Activated naive CD4-positive, alpha-beta T cell treated with anti-CD3 and anti-CD28 coated beads for 36 hours (primary cell): ENCODE measurements at regions of chr17 and their contacts with region 1.

Region 1: GRCh38 chr17:38674749-38675615 is at the start of gene EPOP:
- DNase-seq: peak; percentile 91
- H3K4me3 Mint-ChIP-seq: peak within 1 kb of the TSS; percentile 63
- H3K27ac Mint-ChIP-seq: peak within 1 kb of the TSS; percentile 84
- H3K4me1 Mint-ChIP-seq: peaks cover 52% of the 10 kb centered on the region
- H3K27me3 Mint-ChIP-seq: peaks cover 13% of the 10 kb centered on the region
- total RNA-seq, gene EPOP: 17.6 to 19.2 TPM

Region 2: GRCh38 chr17:38557836-38558727 is 116.9 kb before region 1 on chr17:
- CTCF ChIA-PET with region 1: interaction called, 116 read pairs
- intact Hi-C with region 1: no loop called
- DNase-seq: peak; percentile 92
- H3K4me3 Mint-ChIP-seq: peak overlapping the region; percentile 89
- H3K27ac Mint-ChIP-seq: no peak overlapping the region
- H3K4me1 Mint-ChIP-seq: peaks cover 21% of the 10 kb centered on the region
- H3K27me3 Mint-ChIP-seq: peaks cover 26% of the 10 kb centered on the region

Region 3: GRCh38 chr17:38617011-38617867 is 57.7 kb before region 1 on chr17:
- CTCF ChIA-PET with region 1: no interaction called
- intact Hi-C with region 1: no loop called
- DNase-seq: no peak
- H3K4me3 Mint-ChIP-seq: no peak overlapping the region
- H3K27ac Mint-ChIP-seq: no peak overlapping the region
- H3K4me1 Mint-ChIP-seq: no peaks in the 10 kb centered on the region
- H3K27me3 Mint-ChIP-seq: peaks cover 21% of the 10 kb centered on the region

Region 4: DNA sequence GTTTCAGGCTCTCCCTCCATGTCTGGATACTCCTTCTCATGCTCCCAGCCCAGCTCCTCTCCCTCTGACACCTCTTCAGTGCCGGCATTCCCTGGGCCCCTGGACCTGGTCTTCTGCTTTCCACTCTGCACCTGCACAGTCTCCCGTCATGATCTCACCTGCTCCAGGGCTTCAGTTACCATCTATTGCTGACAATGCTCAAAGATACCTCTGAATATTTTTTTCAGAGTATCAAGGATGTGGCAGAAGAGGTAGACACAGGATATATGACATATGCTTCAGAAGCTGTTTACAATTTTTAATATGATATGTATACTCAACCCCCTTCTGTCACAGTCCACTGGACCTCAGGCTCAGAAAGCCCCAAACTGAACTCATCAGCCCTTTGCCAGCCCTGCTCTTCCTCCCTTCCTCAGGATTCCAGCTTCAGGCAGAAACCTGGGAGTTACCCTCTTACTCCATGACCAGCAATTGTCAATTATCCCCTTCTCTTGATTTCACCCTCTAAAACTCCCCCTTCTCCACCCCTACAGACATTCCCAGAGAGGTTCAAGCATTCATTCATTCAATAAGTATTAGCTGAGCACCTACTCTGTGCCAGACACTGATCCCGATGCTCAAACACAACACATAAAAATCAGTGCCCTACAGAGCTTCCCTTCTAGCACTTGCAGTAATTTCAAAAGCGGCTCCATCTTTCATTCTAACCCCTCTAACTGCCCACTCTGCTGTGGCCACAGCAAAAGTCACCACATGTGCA is 22.3 kb after region 1 on chr17:
- CTCF ChIA-PET with region 1: interaction called, 32 read pairs
- intact Hi-C with region 1: loop called (anchors 1 kb)
- DNase-seq: no peak
- H3K4me3 Mint-ChIP-seq: no peak overlapping the region
- H3K27ac Mint-ChIP-seq: no peak overlapping the region
- H3K4me1 Mint-ChIP-seq: peaks cover 50% of the 10 kb centered on the region
- H3K27me3 Mint-ChIP-seq: no peaks in the 10 kb centered on the region

Region 5: DNA sequence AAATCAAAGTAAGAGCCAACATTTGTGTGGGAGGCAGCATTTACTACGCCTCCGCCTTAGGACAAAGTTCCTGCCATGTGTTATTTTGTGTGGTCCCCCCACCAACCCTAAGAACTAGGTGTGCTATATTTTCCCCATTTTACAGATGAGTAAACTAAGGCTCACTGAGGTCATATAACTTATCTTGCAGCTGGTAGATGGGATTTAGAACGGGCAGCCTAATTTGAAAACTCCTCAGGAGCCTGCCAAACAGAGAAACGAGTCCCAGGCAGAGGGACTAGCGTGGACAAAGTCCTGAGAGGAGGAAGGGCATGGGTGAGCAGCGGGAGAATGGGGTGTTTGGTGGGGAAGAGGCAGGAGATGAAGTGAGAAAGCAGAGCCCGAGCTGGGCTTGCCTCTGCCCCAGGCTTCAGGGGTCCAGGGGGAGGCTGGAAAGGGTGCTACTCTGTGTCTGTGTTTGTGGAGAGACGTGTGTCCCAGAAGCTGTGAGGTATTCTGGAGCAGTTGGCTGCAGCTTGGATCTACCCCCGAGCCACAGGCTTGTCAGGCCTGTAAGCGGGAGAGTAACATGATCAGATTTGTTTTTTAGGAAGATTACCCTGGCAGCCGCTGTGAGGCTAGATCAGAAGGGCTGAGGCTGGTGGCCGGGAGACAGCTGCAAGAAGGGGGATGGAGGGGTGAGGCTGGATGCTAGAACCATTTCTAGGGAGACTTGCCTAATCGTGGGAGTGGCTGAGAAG is 35.1 kb after region 1 on chr17:
- CTCF ChIA-PET with region 1: interaction called, 11 read pairs
- intact Hi-C with region 1: no loop called
- DNase-seq: no peak
- H3K4me3 Mint-ChIP-seq: no peak overlapping the region
- H3K27ac Mint-ChIP-seq: peak overlapping the region; percentile 50
- H3K4me1 Mint-ChIP-seq: peaks cover 59% of the 10 kb centered on the region
- H3K27me3 Mint-ChIP-seq: no peaks in the 10 kb centered on the region

Region 6: GRCh38 chr17:38735161-38735997 is 60.4 kb after region 1 on chr17:
- CTCF ChIA-PET with region 1: interaction called, 60 read pairs
- intact Hi-C with region 1: loop called (anchors 1 kb)
- DNase-seq: peak; percentile 77
- H3K4me3 Mint-ChIP-seq: no peak overlapping the region
- H3K27ac Mint-ChIP-seq: peak overlapping the region; percentile 37
- H3K4me1 Mint-ChIP-seq: peaks cover 47% of the 10 kb centered on the region
- H3K27me3 Mint-ChIP-seq: no peaks in the 10 kb centered on the region

Region 7: DNA sequence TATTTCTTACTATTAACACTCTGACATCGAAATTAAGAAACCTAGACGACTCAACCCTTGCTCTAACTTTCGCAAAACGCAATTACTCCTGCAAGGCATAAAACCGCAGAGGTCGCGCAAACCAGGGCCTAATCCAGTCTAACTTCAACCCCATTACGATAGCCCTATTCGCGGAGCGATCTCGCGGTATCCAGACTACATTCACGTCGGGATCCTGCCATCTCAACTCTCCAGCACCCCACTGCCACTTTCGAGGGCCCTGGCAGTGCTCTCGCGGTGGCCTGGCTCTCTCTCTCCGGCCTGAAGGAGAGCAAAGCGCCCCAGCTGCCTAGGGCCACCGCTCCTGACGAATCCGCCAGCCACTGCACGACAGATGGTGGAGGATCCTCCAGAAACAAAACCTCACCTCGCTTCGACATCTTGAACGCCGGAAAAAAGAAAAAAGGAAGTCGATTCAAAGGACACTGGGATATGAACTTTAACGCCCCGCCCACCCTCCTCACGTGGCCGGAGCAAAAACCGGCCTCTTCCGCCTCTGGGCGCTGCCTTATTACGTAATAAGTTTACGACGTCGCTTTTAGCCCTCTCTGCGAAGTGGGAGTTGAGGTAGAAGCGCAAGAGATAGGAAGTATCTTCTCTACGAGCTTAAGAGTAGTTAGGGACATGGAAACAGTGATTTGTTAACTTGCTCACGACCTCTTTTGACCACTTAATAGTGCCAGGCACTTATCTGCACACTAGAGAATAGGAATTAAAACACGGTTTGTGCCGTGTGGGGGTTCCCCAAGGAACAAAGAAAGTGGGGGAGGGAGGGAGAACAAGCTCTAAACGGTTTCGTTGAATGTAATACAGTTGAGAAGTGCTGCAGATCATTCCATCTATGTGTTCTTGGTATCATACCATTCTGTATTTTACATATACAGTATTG is 178.6 kb after region 1 on chr17 and contains the start of gene RPL23:
- CTCF ChIA-PET with region 1: no interaction called
- intact Hi-C with region 1: loop called (anchors 2 kb)
- DNase-seq: peak; percentile 95
- H3K4me3 Mint-ChIP-seq: peak within 1 kb of the TSS; percentile 96
- H3K27ac Mint-ChIP-seq: peak within 1 kb of the TSS; percentile 99
- H3K4me1 Mint-ChIP-seq: peaks cover 43% of the 10 kb centered on the region
- H3K27me3 Mint-ChIP-seq: no peaks in the 10 kb centered on the region
- total RNA-seq, gene RPL23: 2,241 to 2,332 TPM